ENCODE measurements at regions of chr11 and their contacts with region 1.

Region 1: GRCh38 chr11:61384271-61385242 is 7.8 kb upstream of the TMEM216 start:
- DNase-seq: no peak
- H3K4me3 ChIP-seq: no peak overlapping the region
- H3K4me3 Mint-ChIP-seq: no peak overlapping the region
- H3K27ac ChIP-seq: no peak overlapping the region
- H3K27ac Mint-ChIP-seq: peak overlapping the region in 1 of 7 donors; percentile 18
- H3K4me1 ChIP-seq: peaks cover 8% of the 10 kb centered on the region
- H3K4me1 Mint-ChIP-seq: peaks cover 3 to 9% (median 6%) of the 10 kb centered on the region in 4 donors
- H3K27me3 ChIP-seq: no peaks in the 10 kb centered on the region
- H3K27me3 Mint-ChIP-seq: no peaks in the 10 kb centered on the region

Region 2: DNA sequence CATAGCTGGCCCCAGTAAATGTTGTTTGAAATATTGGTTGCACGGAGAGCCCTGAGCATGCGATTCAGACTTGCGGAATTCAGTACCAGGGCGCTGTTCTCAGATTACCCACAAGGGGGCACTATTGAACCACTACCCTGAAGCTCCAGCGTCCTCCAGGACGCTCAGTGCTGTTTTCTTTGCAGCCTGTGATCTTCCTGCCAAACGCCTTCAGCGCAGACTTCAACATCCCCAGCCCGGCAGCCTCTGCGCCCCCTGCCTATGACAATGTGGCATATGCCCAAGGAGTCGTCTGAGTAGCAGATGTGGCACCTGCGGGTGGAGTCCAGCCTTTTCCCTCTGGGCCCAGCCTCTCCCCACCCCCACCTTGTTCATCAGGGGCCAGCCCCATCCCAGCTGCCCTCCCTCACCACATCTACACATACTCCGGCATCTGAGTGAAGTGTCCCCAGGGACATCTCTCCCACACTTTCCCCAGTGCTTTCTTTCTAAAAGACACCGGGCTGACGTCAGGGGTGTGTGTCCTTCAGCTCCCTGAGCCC is 609.1 kb before region 1 on chr11:
- CTCF ChIA-PET with region 1: interaction called, 6 read pairs
- POLR2A ChIA-PET with region 1: no interaction called
- intact Hi-C with region 1: loop called (anchors 5 kb)
- DNase-seq: peak; percentile 77 to 80 (median 78)
- H3K4me3 ChIP-seq: no peak overlapping the region
- H3K4me3 Mint-ChIP-seq: peak overlapping the region in 2 of 8 donors; percentile 23 to 54
- H3K27ac ChIP-seq: no peak overlapping the region
- H3K27ac Mint-ChIP-seq: peak overlapping the region in 4 of 7 donors; percentile 26 to 87 (median 66)
- H3K4me1 ChIP-seq: no peaks in the 10 kb centered on the region
- H3K4me1 Mint-ChIP-seq: peaks cover 5 to 16% (median 8%) of the 10 kb centered on the region in 4 donors
- H3K27me3 ChIP-seq: no peaks in the 10 kb centered on the region
- H3K27me3 Mint-ChIP-seq: peaks cover 3 to 4% of the 10 kb centered on the region in 2 donors

Region 3: DNA sequence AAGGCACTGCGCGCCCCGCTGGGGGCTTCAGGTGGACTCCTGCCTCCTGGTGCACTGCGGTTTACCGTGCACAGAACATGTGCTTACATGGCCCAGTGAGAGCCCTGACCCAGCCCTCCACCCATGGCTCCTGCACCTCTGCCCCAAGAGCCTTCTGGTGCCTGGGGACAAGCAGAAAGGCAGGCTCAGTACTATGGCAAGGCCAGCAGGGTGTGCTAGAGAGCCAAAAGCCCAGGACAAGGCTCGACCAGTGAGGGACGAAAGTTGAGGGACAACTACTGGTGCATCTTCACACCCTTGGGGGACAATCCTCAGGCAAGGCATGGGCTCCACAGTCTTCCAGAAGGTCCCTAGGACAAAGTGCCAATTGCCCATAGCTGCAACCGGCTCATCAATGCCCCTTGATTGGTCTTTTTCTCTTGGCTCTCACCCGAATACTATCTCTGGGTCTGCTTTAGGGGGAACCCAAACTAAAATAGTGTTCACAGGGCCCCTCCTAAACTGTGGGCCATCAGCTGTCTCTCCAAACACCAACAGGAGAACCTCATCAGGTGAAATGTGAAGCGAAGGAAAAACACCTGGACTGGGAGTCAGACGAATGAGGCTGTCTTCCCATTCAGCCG is 130.0 kb before region 1 on chr11:
- CTCF ChIA-PET with region 1: interaction called, 31 read pairs
- POLR2A ChIA-PET with region 1: no interaction called
- intact Hi-C with region 1: loop called (anchors 10 kb)
- DNase-seq: peak in 4 of 5 donors; percentile 35 to 44 (median 40)
- H3K4me3 ChIP-seq: no peak overlapping the region
- H3K4me3 Mint-ChIP-seq: no peak overlapping the region
- H3K27ac ChIP-seq: no peak overlapping the region
- H3K27ac Mint-ChIP-seq: no peak overlapping the region
- H3K4me1 ChIP-seq: no peaks in the 10 kb centered on the region
- H3K4me1 Mint-ChIP-seq: no peaks in the 10 kb centered on the region
- H3K27me3 ChIP-seq: no peaks in the 10 kb centered on the region
- H3K27me3 Mint-ChIP-seq: peaks cover 3 to 4% of the 10 kb centered on the region in 2 donors

Region 4: GRCh38 chr11:61347916-61348461 is 36.6 kb before region 1 on chr11:
- CTCF ChIA-PET with region 1: interaction called, 13 read pairs
- POLR2A ChIA-PET with region 1: no interaction called
- intact Hi-C with region 1: no loop called
- DNase-seq: no peak
- H3K4me3 ChIP-seq: no peak overlapping the region
- H3K4me3 Mint-ChIP-seq: no peak overlapping the region
- H3K27ac ChIP-seq: no peak overlapping the region
- H3K27ac Mint-ChIP-seq: peak overlapping the region in 2 of 7 donors; percentile 27 to 36
- H3K4me1 ChIP-seq: no peaks in the 10 kb centered on the region
- H3K4me1 Mint-ChIP-seq: peaks cover 0 to 4% (median 0%) of the 10 kb centered on the region in 4 donors
- H3K27me3 ChIP-seq: no peaks in the 10 kb centered on the region
- H3K27me3 Mint-ChIP-seq: no peaks in the 10 kb centered on the region

Region 5: DNA sequence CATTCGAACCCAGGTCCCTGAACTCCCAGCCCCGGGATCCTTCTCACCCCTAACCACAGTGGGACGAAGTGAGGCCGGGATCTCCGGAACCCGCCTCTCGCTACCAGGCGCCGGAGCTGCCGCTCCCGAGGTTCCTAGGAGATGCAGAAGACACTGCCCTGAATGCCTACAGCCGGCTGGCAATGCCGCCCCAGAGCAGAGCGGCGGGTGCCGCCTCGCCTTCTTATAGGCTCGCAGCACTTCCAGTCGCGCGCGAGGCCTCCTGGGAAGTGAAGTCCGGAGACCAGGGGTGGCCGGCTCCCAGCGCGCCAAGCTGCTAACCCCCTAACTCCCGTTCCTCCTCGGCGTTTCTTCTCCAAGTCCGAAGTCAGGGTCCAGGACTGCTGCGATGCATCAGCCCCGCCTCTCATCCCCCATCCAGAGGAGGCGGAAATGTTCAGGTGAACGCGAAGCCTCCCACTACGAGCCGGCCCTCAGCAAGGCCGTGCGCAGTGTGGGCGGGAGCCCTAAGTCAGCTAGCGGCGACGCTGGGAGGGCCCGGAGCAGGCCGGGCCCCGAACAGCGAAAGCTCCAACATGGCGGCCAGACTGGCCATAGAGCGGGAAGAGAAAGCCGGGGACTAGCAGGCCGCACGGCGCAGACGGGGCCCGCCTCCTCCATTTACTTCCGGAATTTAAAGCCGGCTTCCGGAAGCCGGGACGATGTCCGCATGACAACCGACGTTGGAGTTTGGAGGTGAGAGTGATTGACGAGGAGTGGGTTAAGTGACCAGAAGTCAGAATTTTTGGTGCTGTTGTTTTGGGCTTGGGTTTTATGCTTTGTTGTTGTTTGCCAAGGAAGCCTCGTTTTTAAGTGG is 22.6 kb before region 1 on chr11 and contains the starts of genes CYB561A3 and TMEM138:
- CTCF ChIA-PET with region 1: interaction called, 48 read pairs
- POLR2A ChIA-PET with region 1: interaction called, 59 read pairs
- intact Hi-C with region 1: no loop called
- DNase-seq: peak; percentile 83 to 90 (median 85)
- H3K4me3 ChIP-seq: peak within 1 kb of the TSS; percentile 87 to 95
- H3K4me3 Mint-ChIP-seq: peak within 1 kb of the TSS; percentile 93 to 100 (median 98)
- H3K27ac ChIP-seq: peak within 1 kb of the TSS; percentile 95
- H3K27ac Mint-ChIP-seq: peak within 1 kb of the TSS; percentile 92 to 100 (median 99)
- H3K4me1 ChIP-seq: peaks cover 27% of the 10 kb centered on the region
- H3K4me1 Mint-ChIP-seq: peaks cover 21 to 51% (median 33%) of the 10 kb centered on the region in 4 donors
- H3K27me3 ChIP-seq: no peaks in the 10 kb centered on the region
- H3K27me3 Mint-ChIP-seq: no peaks in the 10 kb centered on the region
- total RNA-seq, gene CYB561A3: 40.1 to 42.6 TPM
- total RNA-seq, gene TMEM138: 61.2 to 62.5 TPM

Region 6: GRCh38 chr11:61406067-61406466 is 21.5 kb after region 1 on chr11:
- CTCF ChIA-PET with region 1: interaction called, 39 read pairs
- POLR2A ChIA-PET with region 1: interaction called, 3 read pairs
- intact Hi-C with region 1: no loop called
- DNase-seq: no peak
- H3K4me3 ChIP-seq: no peak overlapping the region
- H3K4me3 Mint-ChIP-seq: no peak overlapping the region
- H3K27ac ChIP-seq: no peak overlapping the region
- H3K27ac Mint-ChIP-seq: no peak overlapping the region
- H3K4me1 ChIP-seq: no peaks in the 10 kb centered on the region
- H3K4me1 Mint-ChIP-seq: peaks cover 0 to 4% (median 1%) of the 10 kb centered on the region in 4 donors
- H3K27me3 ChIP-seq: no peaks in the 10 kb centered on the region
- H3K27me3 Mint-ChIP-seq: no peaks in the 10 kb centered on the region

Region 7: GRCh38 chr11:61509043-61510029 is 124.8 kb after region 1 on chr11:
- CTCF ChIA-PET with region 1: no interaction called
- POLR2A ChIA-PET with region 1: no interaction called
- intact Hi-C with region 1: no loop called
- DNase-seq: peak; percentile 45 to 68 (median 60)
- H3K4me3 ChIP-seq: peak overlapping the region; percentile 5 to 11
- H3K4me3 Mint-ChIP-seq: peak overlapping the region in 7 of 8 donors; percentile 17 to 64 (median 54)
- H3K27ac ChIP-seq: no peak overlapping the region
- H3K27ac Mint-ChIP-seq: no peak overlapping the region
- H3K4me1 ChIP-seq: peaks cover 17% of the 10 kb centered on the region
- H3K4me1 Mint-ChIP-seq: peaks cover 3 to 10% (median 6%) of the 10 kb centered on the region in 4 donors
- H3K27me3 ChIP-seq: peaks cover 16% of the 10 kb centered on the region
- H3K27me3 Mint-ChIP-seq: peaks cover 28 to 36% of the 10 kb centered on the region in 2 donors